ENCODE measurements at regions of chr1 and their contacts with region 1.

Region 1: GRCh38 chr1:237041795-237042525 is at the start of gene RYR2:
- DNase-seq: peak; percentile 70 to 80
- H3K4me3 ChIP-seq: peak within 1 kb of the TSS; percentile 51 to 74 (median 54)
- H3K27ac ChIP-seq: no peak within 1 kb of the TSS
- H3K4me1 ChIP-seq: peaks cover 5 to 29% (median 11%) of the 10 kb centered on the region in 4 experiments; a peak in 6 of 7 replicates
- H3K27me3 ChIP-seq: peaks cover 1 to 36% (median 25%) of the 10 kb centered on the region in 4 experiments
- CTCF ChIP-seq: peak; percentile 69 to 83 (median 79)
- EP300 ChIP-seq: no peak
- POLR2A ChIP-seq: peak; percentile 86 to 87
- RAD21 ChIP-seq: peak; percentile 78 to 83
- total RNA-seq, gene RYR2: 4.4 and 4.7 TPM in 2 replicates

Region 2: DNA sequence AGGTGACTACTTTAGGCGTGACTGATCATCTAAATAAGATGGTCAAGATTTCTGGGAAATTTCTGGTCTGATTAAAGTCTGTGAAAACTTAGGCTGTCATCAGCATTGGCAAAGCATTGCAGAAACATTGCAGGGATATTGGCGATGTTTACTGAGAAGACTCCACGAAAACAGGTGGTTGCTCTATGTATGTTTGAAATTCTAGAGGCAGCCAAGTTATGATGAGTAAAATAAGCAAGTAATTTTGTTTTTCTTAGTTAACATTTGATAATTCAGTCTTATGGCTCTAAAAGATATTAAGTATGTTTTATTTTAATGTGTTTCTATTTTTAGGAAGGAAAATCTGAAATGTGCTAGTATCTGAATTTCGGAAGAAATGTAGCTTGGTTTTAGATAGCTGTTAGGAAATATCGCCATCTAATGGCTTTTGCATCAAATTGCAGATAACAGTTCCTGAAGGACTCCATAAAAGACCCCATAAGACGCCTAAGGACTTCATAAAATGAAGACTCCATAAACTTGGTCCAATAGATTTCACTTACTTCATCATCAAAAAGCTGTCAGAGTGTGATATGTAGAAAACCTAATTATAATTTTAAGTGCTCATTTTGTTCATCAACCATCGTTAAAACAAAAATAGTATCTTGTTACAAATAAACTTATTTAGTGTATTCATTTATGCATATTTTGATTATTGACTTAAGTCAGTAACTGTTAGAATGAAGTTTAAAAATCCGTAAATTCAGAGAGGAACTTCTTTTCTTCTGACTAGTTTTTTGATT is 344.6 kb after region 1 on chr1:
- CTCF ChIA-PET with region 1: interaction called, 10 read pairs
- POLR2A ChIA-PET with region 1: no interaction called
- DNase-seq: no peak
- H3K4me3 ChIP-seq: no peak overlapping the region
- H3K27ac ChIP-seq: no peak overlapping the region
- H3K4me1 ChIP-seq: no peaks in the 10 kb centered on the region
- H3K27me3 ChIP-seq: no peaks in the 10 kb centered on the region
- CTCF ChIP-seq: peak in 2 of 3 experiments; percentile 56 to 68; a peak in 2 of 4 replicates
- EP300 ChIP-seq: no peak
- POLR2A ChIP-seq: no peak
- RAD21 ChIP-seq: peak; percentile 89 to 90